ENCODE measurements at regions of chr16 and their contacts with region 1.

Region 1: DNA sequence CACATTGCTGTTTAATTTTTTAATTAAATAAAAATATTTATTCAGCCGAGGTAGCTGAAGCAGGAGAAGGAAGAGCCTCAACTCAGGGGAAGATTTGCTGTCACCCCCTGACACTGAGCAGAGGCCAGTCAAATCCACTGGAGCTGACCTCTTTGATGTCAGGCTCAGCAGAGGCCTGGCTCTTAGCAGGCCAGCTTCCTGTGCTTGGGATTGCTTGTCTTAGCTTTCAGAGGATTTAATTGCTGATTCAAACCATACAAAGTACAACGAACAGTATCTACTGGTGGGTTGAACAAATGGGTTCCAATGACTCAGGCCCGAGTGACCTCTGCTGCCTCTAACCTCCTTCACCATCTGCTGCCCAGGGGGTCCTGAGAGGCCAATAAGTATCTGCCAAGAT is 417.0 kb upstream of the HSBP1 start:
- DNase-seq: no peak
- ATAC-seq: no peak
- H3K4me3 Mint-ChIP-seq: no peak overlapping the region
- H3K27ac Mint-ChIP-seq: no peak overlapping the region
- H3K4me1 Mint-ChIP-seq: no peaks in the 10 kb centered on the region
- H3K27me3 Mint-ChIP-seq: no peaks in the 10 kb centered on the region
- CTCF ChIP-seq: no peak

Region 2: DNA sequence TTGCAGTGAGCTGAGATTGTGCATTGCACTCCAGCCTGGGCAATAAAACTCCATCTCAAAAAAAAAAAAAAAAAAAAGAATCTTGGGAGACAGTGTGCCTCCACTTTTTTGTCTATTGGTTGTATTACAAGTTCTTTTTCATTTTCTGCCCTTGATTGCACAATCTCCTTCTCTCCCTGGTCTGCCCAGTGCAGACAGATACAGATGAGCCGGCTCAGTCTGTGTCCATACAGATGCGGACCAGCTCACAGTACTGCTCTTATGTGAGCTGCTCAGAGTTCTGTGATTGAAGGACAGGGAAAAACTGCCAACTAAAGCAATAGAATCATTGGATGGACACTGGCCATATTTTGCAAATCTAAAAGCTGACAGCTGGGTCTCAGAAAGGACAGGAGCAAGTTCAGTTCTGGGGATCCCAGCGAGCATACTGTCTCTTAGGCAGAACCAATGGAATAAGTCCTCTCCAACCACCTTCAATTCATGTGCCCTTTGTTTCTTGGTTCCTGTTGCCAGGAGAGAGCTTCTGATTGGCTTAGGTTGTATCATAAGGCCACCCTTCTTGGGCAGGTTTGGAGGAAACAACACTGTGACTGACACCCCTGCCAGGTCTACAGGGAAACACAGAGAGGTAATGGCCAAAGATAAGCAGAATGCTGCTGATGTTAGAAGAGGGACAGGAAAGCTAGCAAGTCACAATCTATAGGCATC is 78.6 kb before region 1 on chr16:
- CTCF ChIA-PET with region 1: no interaction called
- POLR2A ChIA-PET with region 1: no interaction called
- DNase-seq: no peak
- ATAC-seq: peak; percentile 57
- H3K4me3 Mint-ChIP-seq: no peak overlapping the region
- H3K27ac Mint-ChIP-seq: no peak overlapping the region
- H3K4me1 Mint-ChIP-seq: peaks cover 2% of the 10 kb centered on the region
- H3K27me3 Mint-ChIP-seq: no peaks in the 10 kb centered on the region; the same call in 1 of the 2 replicates
- CTCF ChIP-seq: no peak

Region 3: GRCh38 chr16:83402967-83403366 is 12.2 kb after region 1 on chr16:
- CTCF ChIA-PET with region 1: interaction called, 10 read pairs
- POLR2A ChIA-PET with region 1: no interaction called
- DNase-seq: no peak
- ATAC-seq: no peak
- H3K4me3 Mint-ChIP-seq: no peak overlapping the region
- H3K27ac Mint-ChIP-seq: no peak overlapping the region
- H3K4me1 Mint-ChIP-seq: no peaks in the 10 kb centered on the region
- H3K27me3 Mint-ChIP-seq: no peaks in the 10 kb centered on the region; the same call in 1 of the 2 replicates
- CTCF ChIP-seq: no peak

Measured in WTC11 (cell line).